Mammary epithelial cell (primary cell): ENCODE measurements at regions of chr4 and their contacts with region 1.

Region 1: DNA sequence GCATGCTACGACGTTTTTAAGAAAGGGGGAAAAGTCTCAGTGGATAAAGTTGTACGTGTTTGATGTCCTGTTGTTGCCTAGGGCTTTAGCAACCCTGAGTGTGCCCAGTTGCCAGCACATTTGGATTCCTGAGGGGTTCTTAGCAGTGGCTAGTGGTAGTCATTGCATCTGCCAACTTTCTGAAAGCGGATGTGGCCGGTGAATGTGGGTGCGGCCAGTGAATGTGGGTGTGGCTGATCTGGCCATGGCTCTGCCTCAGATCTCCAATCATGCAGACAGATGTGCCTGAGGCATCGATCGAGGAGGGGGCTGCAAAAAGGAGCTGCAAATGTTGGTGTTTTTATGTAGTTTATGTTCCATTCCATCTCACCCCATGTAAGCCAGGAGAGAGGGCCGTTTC is 41.5 kb upstream of the FAT1 start:
- DNase-seq: peak; percentile 95
- H3K4me3 ChIP-seq: peak overlapping the region in 2 of 3 experiments; percentile 6 to 25
- H3K27ac ChIP-seq: peak overlapping the region; percentile 91
- H3K4me1 ChIP-seq: peaks cover 28% of the 10 kb centered on the region
- H3K27me3 ChIP-seq: no peaks in the 10 kb centered on the region
- CTCF ChIP-seq: no peak

Region 2: GRCh38 chr4:186754976-186755375 is 10.2 kb before region 1 on chr4:
- CTCF ChIA-PET with region 1: no interaction called
- dilution Hi-C with region 1: no loop called
- in situ Hi-C with region 1: no loop called
- intact Hi-C with region 1: loop called (anchors 1 kb)
- DNase-seq: no peak
- H3K4me3 ChIP-seq: no peak overlapping the region
- H3K27ac ChIP-seq: no peak overlapping the region
- H3K4me1 ChIP-seq: no peaks in the 10 kb centered on the region
- H3K27me3 ChIP-seq: no peaks in the 10 kb centered on the region
- CTCF ChIP-seq: no peak

Region 3: DNA sequence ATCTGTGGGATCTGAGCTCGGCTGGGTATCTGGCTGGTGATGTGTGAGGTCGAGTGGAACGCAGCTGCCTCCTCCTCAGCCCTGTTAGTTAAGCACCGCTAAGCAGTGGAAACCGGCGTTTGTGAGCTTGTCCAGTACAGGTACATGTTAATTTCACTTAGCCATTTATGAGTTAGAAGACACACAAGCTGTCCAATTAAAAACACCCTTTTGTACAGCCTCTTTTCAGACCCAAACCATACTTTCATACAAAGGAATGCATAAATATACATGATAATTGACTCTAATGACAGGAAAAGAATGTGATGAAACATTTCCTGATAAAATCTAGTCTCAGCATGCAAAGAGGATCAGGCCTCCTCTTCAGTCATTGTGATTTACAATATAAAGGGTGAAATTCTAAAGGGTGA is 122.2 kb after region 1 on chr4:
- CTCF ChIA-PET with region 1: no interaction called
- dilution Hi-C with region 1: no loop called
- in situ Hi-C with region 1: no loop called
- intact Hi-C with region 1: loop called (anchors 5 kb)
- DNase-seq: peak; percentile 71
- H3K4me3 ChIP-seq: peak overlapping the region in 1 of 3 experiments; percentile 10
- H3K27ac ChIP-seq: peak overlapping the region; percentile 62
- H3K4me1 ChIP-seq: peaks cover 25% of the 10 kb centered on the region
- H3K27me3 ChIP-seq: no peaks in the 10 kb centered on the region
- CTCF ChIP-seq: no peak